Activated B cell treated with CpG ODN at 0.5 μM for 24 hours (primary cell): ENCODE measurements at regions of chr4 and their contacts with region 1.

Region 1: DNA sequence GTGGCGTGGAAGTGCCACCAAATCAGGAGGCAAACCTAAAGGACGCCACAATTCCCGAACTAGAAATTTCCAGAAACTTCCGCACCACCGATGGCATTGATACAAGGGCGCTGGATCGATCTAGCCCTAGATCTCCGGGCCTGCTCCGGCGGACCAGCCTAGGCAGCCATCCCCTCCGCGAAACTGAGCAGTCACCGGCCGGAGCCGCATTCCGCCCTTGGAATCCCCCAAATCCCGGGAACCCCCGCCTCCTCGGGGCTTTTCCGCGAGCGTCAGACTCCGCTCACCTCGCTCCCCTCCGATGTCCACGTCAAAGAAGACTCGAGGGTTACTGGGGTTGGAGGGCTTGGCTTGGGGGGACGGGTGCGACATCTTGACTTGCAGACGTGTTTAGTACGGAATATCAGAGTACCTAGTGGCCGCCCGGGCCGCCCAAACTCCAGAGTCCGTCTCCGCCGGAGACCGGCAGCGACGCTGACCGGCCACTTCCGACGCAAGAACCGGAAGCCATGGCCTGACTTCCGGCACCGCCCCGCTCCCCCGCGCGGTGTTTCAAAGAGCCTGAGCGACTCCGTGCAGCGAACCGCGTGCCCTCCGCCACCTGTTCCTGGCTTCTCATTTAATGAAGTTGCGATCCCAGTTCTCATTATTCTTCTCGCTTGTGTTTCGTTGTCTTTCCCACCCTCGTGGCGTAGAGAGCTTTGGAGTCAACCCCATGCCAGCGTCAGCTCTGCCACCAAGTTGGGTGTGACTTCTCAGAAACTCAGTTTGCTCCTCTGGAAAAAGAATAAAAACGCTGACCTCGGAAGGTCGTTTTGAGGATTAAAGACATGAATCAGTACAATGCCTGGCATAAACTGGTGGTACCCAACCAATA is at the start of gene PPID:
- DNase-seq: peak; percentile 79
- ATAC-seq: peak; percentile 90
- H3K4me3 Mint-ChIP-seq: peak within 1 kb of the TSS; percentile 97
- H3K27ac Mint-ChIP-seq: peak within 1 kb of the TSS; percentile 93
- H3K4me1 Mint-ChIP-seq: peaks cover 21% of the 10 kb centered on the region
- H3K27me3 Mint-ChIP-seq: peaks cover 4% of the 10 kb centered on the region
- CTCF ChIP-seq: no peak
- total RNA-seq, gene PPID: 28.5 and 29.8 TPM in 2 replicates

Region 2: DNA sequence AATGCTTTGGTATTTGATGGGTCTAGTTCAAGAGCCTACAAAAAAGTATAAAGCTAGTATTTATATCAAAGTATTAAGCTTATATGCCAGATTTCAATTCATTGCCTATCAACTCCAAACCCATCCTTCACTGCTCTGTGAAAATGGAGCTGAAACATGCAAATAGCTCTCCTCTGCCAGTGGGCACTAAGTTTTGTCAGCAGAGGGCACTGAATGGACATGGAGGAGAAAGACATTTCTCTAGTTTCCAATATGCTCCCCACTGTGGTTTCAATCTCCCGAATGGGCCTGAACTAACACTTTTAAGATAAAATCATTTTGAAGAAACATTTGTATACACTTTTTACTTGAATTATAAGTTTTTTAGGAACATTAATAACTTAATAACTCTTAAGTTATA is 12.3 kb before region 1 on chr4:
- CTCF ChIA-PET with region 1: no interaction called
- POLR2A ChIA-PET with region 1: no interaction called
- intact Hi-C with region 1: loop called (anchors 2 kb)
- DNase-seq: no peak
- ATAC-seq: no peak
- H3K4me3 Mint-ChIP-seq: no peak overlapping the region
- H3K27ac Mint-ChIP-seq: no peak overlapping the region
- H3K4me1 Mint-ChIP-seq: no peaks in the 10 kb centered on the region
- H3K27me3 Mint-ChIP-seq: no peaks in the 10 kb centered on the region
- CTCF ChIP-seq: no peak

Region 3: DNA sequence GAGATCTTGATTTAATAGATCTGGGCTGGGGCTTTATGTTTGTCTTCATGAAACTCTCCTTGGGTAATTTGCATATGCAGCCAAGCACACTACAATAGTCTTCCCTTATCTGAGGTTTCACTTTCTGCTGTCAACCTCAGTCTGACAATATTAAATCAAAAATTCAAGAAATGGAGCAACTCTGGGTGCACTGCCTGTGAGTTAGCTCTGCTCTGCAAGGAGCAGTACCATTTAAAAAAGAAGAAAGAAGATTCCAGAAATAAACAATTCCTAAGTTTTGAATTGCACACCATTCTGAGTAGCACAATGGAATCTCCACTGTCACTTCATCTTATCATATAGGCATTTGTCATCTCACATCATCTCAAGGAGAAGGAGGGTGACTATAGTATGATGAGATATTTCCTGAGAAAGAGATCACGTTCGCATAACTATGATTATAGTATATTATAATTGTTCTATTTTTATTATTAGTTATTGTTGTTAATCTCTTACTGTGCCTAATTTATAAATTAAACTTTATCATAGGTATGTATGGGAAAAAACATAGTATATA is 55.1 kb after region 1 on chr4:
- CTCF ChIA-PET with region 1: no interaction called
- POLR2A ChIA-PET with region 1: no interaction called
- intact Hi-C with region 1: loop called (anchors 1 kb)
- DNase-seq: no peak
- ATAC-seq: peak; percentile 85
- H3K4me3 Mint-ChIP-seq: no peak overlapping the region
- H3K27ac Mint-ChIP-seq: no peak overlapping the region
- H3K4me1 Mint-ChIP-seq: peaks cover 7% of the 10 kb centered on the region
- H3K27me3 Mint-ChIP-seq: peaks cover 47% of the 10 kb centered on the region
- CTCF ChIP-seq: no peak

Region 4: DNA sequence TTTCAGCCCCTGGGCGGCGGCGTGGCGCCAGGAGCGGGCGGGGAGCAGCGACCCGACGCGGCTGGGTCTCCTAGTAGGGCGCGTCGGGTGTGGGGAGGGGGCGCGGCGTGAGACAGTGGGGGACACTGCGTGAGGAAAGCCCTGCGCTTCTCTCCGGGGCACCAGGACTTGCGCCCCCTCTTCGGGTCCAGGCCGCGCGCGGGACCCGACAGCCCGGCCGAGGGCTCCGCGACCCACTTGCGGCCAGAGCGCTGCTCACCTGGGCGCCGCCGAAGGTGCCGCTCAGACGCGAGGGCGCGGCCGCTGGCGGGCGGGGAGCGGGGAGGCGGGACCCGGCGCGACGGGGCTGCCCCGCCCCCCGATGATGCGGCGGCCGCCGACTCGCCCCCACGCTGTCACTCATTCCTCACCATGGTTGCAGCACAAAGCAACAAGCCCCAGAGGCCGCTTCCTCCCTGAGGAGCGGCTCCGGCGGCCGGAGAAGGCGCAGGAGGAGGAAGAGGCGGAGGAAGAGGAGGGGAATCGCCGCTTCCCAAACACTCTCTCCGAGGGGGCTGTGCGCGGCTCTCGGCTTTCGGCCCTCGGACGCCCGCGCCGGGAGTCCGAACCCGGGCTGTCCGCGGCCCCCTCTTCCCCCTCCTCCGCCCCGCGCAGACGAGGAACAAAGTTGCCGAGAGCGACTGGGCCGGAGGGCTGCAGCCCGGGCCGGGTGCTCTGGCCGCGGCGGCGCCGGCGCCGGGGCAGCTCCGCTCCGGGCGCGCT is 379.6 kb after region 1 on chr4 and contains the start of gene RAPGEF2:
- CTCF ChIA-PET with region 1: no interaction called
- POLR2A ChIA-PET with region 1: no interaction called
- intact Hi-C with region 1: loop called (anchors 2 kb)
- DNase-seq: peak; percentile 85
- ATAC-seq: peak; percentile 83
- H3K4me3 Mint-ChIP-seq: peak within 1 kb of the TSS; percentile 84
- H3K27ac Mint-ChIP-seq: peak within 1 kb of the TSS; percentile 79
- H3K4me1 Mint-ChIP-seq: peaks cover 35% of the 10 kb centered on the region
- H3K27me3 Mint-ChIP-seq: peaks cover 1% of the 10 kb centered on the region
- CTCF ChIP-seq: no peak
- total RNA-seq, gene RAPGEF2: 18.1 and 22.9 TPM in 2 replicates